ENCODE measurements at regions of chr16 and their contacts with region 1.

Region 1: GRCh38 chr16:57576429-57576870 is 34.0 kb downstream of the ADGRG5 start:
- DNase-seq: peak; percentile 87
- H3K4me3 Mint-ChIP-seq: no peak overlapping the region
- H3K27ac Mint-ChIP-seq: peak overlapping the region; percentile 85
- H3K4me1 Mint-ChIP-seq: peaks cover 58% of the 10 kb centered on the region
- H3K27me3 Mint-ChIP-seq: peaks cover 3% of the 10 kb centered on the region

Region 2: DNA sequence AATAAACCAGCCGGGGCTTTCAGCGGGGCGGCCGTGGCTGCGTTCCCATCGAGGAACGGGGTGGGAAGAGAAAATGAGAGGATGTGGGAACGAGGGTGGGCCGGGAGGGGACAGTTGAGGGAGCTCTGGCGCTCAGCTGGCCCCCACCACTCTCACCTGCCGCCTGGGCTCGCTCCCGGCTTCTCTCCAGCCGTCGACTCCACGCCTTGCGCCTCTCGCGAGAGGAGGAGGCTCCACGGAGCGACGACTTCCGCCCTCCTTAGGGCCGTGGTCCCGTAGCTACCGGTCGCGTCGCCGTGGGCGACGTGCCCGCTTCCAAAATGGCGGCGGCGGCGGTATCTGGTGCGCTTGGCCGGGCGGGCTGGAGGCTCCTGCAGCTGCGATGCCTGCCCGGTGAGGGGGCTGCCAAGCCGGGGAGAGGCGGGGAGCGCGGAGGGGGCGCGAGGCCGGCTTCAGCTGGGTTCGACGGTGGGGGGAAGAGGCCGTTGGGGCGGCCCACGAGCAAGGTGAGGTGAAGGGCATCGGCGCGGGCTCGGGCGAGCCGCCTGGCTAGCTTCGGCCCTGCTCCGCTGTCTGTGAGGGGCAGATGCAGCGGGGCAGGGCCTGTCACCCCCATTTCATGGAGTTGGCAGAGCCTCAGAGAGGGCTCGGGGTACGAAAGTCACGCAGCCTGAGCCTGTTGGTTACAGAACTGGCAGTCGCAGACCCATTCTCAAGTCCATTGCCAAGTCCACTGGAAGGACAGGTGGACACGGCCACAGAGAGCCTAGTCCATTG is 129.1 kb before region 1 on chr16 and contains the starts of genes CIAPIN1 and COQ9:
- CTCF ChIA-PET with region 1: no interaction called
- POLR2A ChIA-PET with region 1: no interaction called
- DNase-seq: peak; percentile 95
- H3K4me3 Mint-ChIP-seq: peak within 1 kb of the TSS; percentile 91
- H3K27ac Mint-ChIP-seq: peak within 1 kb of the TSS; percentile 83
- H3K4me1 Mint-ChIP-seq: peaks cover 33% of the 10 kb centered on the region
- H3K27me3 Mint-ChIP-seq: no peaks in the 10 kb centered on the region
- total RNA-seq, gene CIAPIN1: 35.8 to 36.1 TPM
- total RNA-seq, gene COQ9: 28.5 to 29.0 TPM

Region 3: DNA sequence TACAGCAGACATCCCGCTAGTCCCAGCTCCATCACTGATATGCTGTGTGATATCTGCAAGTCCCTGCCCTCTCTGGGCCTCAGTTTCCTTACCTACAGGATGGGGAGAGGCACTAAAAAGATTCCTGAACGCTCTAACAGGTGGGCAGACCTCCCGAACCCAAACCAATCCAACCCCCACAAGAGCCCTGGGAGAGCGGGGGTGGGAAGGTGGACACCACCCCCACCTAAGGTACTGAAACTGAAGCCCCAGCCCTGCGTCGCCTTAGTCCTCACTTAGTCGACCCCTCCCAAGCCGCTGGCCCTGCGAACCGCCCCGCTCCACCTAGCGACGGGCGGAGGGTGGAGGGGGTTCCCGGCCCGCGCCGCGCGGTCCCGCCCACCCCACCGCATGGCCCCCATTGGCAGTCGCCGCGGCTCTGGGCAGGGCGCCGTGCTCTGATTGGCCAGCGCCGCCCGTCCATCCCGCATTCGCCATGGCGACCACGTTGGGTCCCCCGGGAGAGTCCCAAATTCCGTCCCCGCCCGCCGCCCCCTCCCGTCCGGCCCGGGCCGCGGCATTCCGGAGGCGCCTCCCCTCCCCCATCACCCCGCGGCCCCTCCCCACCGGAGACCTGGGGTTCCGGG is 40.7 kb before region 1 on chr16:
- CTCF ChIA-PET with region 1: interaction called, 5 read pairs
- POLR2A ChIA-PET with region 1: interaction called, 14 read pairs
- DNase-seq: peak; percentile 95
- H3K4me3 Mint-ChIP-seq: peak overlapping the region; percentile 79
- H3K27ac Mint-ChIP-seq: peak overlapping the region; percentile 80
- H3K4me1 Mint-ChIP-seq: peaks cover 79% of the 10 kb centered on the region
- H3K27me3 Mint-ChIP-seq: no peaks in the 10 kb centered on the region

Region 4: DNA sequence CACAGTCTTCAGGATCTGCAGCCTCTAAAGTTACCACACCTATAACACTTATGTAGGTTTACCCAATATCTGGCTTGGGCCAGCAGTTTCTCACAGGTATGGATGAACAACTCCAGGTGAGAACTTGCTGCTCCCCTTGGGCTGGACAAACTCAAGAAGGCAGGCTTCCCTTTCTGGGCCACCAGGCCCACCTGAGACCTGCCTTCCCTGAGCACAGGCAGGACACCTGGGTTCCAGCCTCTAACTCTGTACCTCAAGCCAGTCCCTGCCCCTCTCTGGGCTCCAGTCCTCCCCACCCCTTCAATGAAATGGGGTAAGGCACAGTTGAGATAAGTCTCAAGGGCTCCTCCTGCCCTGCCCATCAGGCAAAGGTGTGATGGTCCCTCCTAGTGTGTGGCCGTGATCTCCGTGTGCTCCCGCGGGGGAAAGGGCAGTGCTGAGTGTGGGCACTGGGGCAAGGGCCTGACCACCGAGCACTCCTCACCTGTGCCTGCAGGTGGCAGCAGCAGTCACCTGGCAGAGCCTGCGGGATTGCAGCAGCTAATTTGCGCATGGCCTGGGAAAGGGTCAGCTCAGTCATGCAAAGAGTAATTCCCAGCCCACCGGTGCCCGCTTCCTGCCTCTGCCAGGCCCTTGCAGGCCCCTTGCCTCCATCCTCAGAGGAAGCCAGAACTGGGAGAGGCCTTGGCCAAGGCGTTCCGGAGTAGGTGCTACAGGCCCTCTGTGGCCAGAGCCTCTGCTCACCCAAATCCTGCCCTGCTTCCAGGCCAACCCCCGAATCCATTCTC is 23.8 kb after region 1 on chr16:
- CTCF ChIA-PET with region 1: interaction called, 140 read pairs
- POLR2A ChIA-PET with region 1: interaction called, 47 read pairs
- DNase-seq: peak; percentile 50
- H3K4me3 Mint-ChIP-seq: no peak overlapping the region
- H3K27ac Mint-ChIP-seq: peak overlapping the region; percentile 97
- H3K4me1 Mint-ChIP-seq: peaks cover 66% of the 10 kb centered on the region
- H3K27me3 Mint-ChIP-seq: peaks cover 4% of the 10 kb centered on the region

Region 5: DNA sequence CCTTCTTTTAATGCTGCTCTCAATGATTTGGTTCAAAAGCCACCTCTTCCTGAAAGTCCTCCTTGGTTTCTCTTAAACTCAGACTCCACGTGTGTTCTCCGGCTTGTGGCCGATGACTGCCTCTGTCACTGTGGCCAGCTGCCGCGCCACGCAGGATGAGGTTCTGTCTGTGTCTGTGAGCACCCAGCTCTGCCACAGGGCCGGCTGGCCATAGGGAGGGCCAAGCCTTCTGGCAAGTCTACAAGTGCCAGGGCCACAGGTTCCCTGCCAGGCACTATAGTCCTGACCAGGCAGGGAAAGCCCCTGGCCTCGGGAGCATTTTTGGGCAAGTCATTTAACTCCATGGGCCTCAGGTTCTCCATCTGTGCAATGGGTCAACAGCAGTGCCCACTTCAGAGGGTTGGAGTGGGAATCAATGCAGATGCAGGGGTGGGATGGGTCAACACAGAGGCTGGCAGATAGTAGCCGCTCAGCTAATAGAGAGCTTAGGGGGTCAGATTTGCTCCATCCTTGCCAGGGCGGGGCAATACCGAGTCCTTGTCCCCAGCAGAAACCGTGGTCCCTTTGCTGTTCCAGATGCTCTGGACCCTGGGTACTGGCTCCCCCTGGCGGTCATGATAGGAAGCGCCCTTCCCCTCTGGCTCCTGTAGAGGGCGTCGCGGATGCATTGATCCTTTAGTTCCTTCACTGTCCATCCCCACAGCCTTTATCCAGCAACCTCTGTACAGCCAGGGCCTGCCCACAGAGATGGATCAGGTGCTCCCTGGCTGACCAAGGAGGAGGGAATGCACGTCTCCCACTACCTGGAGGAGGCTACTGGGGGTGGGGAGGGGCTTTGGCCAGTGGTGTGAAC is 72.4 kb after region 1 on chr16:
- CTCF ChIA-PET with region 1: interaction called, 189 read pairs
- POLR2A ChIA-PET with region 1: interaction called, 25 read pairs
- DNase-seq: peak; percentile 92
- H3K4me3 Mint-ChIP-seq: no peak overlapping the region
- H3K27ac Mint-ChIP-seq: peak overlapping the region; percentile 56
- H3K4me1 Mint-ChIP-seq: peaks cover 39% of the 10 kb centered on the region
- H3K27me3 Mint-ChIP-seq: no peaks in the 10 kb centered on the region

Region 6: GRCh38 chr16:57734925-57735754 is 158.7 kb after region 1 on chr16:
- CTCF ChIA-PET with region 1: interaction called, 31 read pairs
- POLR2A ChIA-PET with region 1: interaction called, 22 read pairs
- DNase-seq: peak; percentile 98
- H3K4me3 Mint-ChIP-seq: peak overlapping the region; percentile 93
- H3K27ac Mint-ChIP-seq: peak overlapping the region; percentile 81
- H3K4me1 Mint-ChIP-seq: peaks cover 30% of the 10 kb centered on the region
- H3K27me3 Mint-ChIP-seq: no peaks in the 10 kb centered on the region

Measured in activated CD4-positive, alpha-beta memory T cell treated with anti-CD3 and anti-CD28 coated beads, Interleukin-2, amount 10 ng/mL, durations not matched to agents 7 days and 5 days (primary cell).